ENCODE measurements at regions of chr17 and their contacts with region 1.

Region 1: GRCh38 chr17:750431-751037 is 1.5 kb downstream of the GEMIN4 start:
- DNase-seq: no peak

Region 2: GRCh38 chr17:828761-829160 is 78.2 kb after region 1 on chr17:
- CTCF ChIA-PET with region 1: no interaction called
- POLR2A ChIA-PET with region 1: no interaction called
- DNase-seq: no peak

Region 3: DNA sequence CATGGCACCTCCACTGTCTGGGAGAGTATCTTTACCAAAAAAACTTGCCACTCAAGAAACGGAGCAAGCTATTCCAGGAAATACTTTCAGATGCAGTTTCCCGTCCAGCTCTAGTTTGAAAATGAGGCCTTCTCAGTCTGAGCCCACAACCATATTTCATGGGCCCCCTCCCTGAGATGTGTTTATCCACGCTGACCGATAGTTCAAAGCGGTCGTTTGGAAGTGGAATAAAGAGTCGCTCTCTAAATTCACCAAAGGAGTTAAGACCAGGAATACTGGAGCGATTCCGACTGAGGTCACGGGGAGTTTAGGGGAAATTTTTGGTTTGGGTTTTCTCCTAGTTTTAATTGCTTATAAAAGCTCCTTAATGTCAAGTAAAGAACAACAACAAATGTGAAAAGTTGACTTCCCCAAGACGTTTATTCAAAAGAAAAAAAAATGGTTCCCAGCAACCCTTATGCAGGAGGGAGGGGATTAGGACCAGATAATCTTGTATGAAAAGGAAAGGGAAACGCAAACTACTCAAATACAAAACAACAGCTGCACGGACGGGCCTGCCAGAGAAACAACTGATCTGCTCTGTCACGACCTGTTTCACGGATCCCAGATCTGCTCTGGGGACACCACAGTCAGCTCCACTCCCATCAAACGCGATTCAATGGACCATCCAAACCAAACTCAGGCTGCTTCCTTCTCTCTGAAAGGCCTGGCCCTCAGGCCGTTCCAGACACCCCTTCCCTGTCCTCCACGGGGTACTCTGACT is 108.7 kb after region 1 on chr17:
- CTCF ChIA-PET with region 1: no interaction called
- POLR2A ChIA-PET with region 1: no interaction called
- DNase-seq: no peak

Region 4: DNA sequence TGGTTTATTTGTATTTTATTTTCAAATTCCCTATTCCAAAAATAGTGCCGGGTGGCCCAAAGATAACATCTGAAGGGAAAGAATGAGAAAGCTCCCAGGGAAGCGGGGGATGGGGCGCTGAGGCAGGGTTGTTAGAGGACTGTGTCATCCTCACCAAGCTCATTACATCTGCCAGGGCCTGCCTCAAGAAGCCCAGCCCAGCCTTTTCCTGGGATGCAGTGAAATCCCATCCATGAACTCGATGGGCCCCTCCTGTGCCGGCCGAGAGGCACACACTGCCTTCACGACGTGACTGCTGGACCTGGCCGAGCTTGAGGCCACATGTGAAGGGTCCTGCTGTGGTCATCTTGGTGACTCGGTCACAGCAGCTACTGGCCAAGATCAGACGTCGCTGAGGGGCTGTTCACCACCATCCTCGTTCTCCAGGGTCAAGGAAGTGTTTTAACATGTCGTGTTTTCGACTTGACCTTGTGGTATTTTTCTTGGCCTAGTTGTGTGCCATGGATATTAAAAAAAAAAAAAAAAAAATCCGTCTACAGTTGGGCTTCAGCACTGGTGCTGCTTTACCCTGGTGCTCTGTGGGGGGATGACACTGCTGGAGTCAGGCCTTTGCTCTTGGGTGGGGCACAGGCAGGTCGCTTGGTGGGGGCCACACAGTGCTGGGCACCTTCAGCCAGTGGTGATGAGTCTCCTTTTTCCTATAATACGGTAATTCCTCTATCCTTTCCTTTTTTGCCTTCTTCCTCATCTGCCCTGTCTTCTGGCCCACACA is 251.3 kb after region 1 on chr17:
- CTCF ChIA-PET with region 1: interaction called, 10 read pairs
- POLR2A ChIA-PET with region 1: no interaction called
- DNase-seq: no peak

Measured in HEK293T (cell line).